CD14-positive monocyte (primary cell): ENCODE measurements at regions of chr19 and their contacts with region 1.

Region 1: GRCh38 chr19:50461066-50461875 is 15.0 kb upstream of the EMC10 start:
- DNase-seq: peak; percentile 64 to 70 (median 67)
- H3K4me3 ChIP-seq: no peak overlapping the region
- H3K4me3 Mint-ChIP-seq: no peak overlapping the region
- H3K27ac ChIP-seq: no peak overlapping the region
- H3K27ac Mint-ChIP-seq: peak overlapping the region in 1 of 7 donors; percentile 10
- H3K4me1 ChIP-seq: no peaks in the 10 kb centered on the region
- H3K4me1 Mint-ChIP-seq: peaks cover 5% of the 10 kb centered on the region
- H3K27me3 ChIP-seq: peaks cover 0 to 7% of the 10 kb centered on the region in 2 donors
- H3K27me3 Mint-ChIP-seq: peaks cover 14 to 44% (median 19%) of the 10 kb centered on the region in 3 donors
- CTCF ChIP-seq: peak; percentile 82

Region 2: DNA sequence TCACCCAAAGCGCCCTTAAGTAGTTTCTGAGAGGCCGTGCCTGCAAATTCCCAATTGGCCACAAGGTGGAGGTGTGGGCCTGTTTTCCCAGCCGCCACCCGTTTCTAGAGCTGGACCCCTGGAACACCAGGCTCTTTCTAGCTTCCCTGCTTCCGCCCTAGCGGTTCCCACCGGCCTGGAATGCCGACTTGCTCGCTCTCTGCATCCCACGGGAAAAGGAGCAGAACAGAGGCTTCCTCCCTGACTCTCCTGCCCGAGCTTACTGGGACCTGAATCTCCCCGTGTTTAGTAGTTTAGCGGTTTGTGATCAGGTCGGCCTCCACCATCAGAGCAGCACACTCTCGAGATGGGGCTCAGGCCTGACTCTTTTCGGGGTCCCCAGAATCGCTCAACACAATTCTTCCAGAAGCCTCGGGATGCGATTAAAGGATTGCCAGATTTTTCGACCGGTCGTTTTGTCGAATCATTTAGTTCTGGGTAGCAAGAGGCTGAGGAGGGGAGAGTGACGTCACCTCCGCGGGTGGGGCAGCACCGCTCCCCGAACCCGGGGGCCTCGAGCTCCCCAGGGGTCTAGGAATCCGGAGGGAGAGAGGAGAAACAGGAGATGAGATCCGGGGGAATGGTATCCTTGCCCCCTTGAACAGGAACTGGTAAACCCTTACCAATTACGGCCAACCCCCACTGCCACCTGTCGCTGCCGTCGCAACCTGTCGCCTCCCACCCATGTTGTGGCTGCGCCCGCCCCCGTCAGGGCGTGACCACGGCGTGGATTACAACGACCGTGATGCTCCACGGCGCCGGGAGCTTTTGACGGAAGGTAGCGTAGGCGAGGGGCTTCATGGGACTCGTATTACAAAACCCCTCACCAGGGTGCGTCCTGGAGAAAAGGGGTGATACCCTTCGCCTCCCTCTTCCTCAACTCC is 103.8 kb before region 1 on chr19:
- intact Hi-C with region 1: loop called in 1 of 2 experiments (anchors 1 kb)
- DNase-seq: peak; percentile 65 to 76 (median 66)
- H3K4me3 ChIP-seq: peak overlapping the region; percentile 61 to 74 (median 64)
- H3K4me3 Mint-ChIP-seq: peak overlapping the region; percentile 86 to 92
- H3K27ac ChIP-seq: peak overlapping the region; percentile 81 to 91
- H3K27ac Mint-ChIP-seq: peak overlapping the region; percentile 92 to 98 (median 97)
- H3K4me1 ChIP-seq: peaks cover 24 to 35% of the 10 kb centered on the region in 2 donors
- H3K4me1 Mint-ChIP-seq: peaks cover 36% of the 10 kb centered on the region
- H3K27me3 ChIP-seq: no peaks in the 10 kb centered on the region
- H3K27me3 Mint-ChIP-seq: peaks cover 3 to 20% (median 14%) of the 10 kb centered on the region in 3 donors
- CTCF ChIP-seq: peak; percentile 93

Region 3: GRCh38 chr19:50368649-50369570 is 92.4 kb before region 1 on chr19:
- intact Hi-C with region 1: loop called (anchors 1 to 2 kb)
- DNase-seq: peak; percentile 70 to 87 (median 87)
- H3K4me3 ChIP-seq: peak overlapping the region; percentile 53 to 90 (median 67)
- H3K4me3 Mint-ChIP-seq: peak overlapping the region; percentile 96 to 99
- H3K27ac ChIP-seq: peak overlapping the region; percentile 6 to 79
- H3K27ac Mint-ChIP-seq: peak overlapping the region; percentile 77 to 98 (median 91)
- H3K4me1 ChIP-seq: peaks cover 26 to 29% of the 10 kb centered on the region in 2 donors
- H3K4me1 Mint-ChIP-seq: peaks cover 29% of the 10 kb centered on the region
- H3K27me3 ChIP-seq: no peaks in the 10 kb centered on the region
- H3K27me3 Mint-ChIP-seq: peaks cover 0 to 8% (median 2%) of the 10 kb centered on the region in 3 donors
- CTCF ChIP-seq: peak; percentile 93

Region 4: DNA sequence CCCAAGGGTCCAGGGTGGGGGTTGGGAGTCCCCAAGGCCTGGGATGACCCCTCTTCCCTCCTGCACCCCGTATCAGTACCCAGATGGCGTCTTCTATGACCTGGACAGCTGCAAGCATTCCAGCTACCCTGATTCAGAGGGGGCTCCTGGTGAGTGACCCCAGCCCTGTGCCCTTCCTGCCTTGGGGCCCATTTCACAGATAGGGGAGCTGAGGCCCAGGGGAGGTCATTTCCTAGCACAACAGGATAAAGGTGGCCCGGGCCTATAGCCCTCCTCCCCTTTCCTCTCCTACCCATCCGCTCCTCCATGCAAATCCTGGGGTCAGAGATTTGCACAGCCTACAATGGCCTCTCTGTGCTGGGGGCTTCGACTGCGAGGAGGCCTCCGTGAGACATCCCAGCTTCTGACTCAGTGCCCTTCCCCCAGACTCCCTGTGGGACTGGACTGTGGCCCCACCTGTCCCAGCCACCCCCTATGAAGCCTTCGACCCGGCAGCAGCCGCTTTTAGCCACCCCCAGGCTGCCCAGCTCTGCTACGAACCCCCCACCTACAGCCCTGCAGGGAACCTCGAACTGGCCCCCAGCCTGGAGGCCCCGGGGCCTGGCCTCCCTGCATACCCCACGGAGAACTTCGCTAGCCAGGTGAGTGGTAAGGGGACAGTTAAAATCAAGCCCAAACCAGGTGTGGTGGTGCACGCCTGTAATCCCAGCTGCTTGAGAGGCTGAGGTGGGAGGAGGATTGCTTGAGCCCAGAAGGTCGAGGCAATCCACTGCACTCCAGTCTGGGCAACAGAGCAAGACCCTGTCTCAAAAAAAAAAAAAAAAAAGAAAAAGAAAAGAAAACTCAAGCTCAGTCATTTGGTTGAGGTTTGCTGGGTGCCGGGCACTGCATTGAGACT is 38.6 kb before region 1 on chr19:
- intact Hi-C with region 1: no loop called
- DNase-seq: no peak
- H3K4me3 ChIP-seq: no peak overlapping the region
- H3K4me3 Mint-ChIP-seq: no peak overlapping the region
- H3K27ac ChIP-seq: no peak overlapping the region
- H3K27ac Mint-ChIP-seq: peak overlapping the region in 2 of 7 donors; percentile 42 to 47
- H3K4me1 ChIP-seq: peaks cover 19 to 24% of the 10 kb centered on the region in 2 donors
- H3K4me1 Mint-ChIP-seq: peaks cover 18% of the 10 kb centered on the region
- H3K27me3 ChIP-seq: peaks cover 5 to 21% of the 10 kb centered on the region in 2 donors
- H3K27me3 Mint-ChIP-seq: peaks cover 24 to 30% (median 26%) of the 10 kb centered on the region in 3 donors
- CTCF ChIP-seq: no peak